CD8-positive, alpha-beta T cell (primary cell): ENCODE measurements at regions of chr21 and their contacts with region 1.

Region 1: DNA sequence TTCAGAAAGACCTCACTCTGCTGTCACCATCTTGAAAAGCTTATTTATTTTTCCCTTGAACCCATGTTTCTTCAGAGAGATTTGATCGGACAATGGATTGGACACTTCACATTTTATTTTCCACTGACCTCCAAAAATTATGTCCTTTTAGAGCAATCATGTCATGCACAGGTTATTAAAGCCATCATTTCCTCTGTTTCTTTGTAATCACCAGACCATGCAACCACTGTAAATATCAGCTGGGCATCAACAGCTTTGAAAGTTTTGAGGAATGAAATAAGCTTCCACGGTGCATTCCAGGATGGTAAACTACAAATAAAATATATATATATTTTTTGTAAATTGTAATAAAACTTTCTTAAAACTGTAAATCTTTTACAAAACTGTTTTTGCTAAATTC is 144.1 kb upstream of the ADAMTS5 start:
- DNase-seq: no peak
- ATAC-seq: no peak
- H3K4me3 ChIP-seq: no peak overlapping the region
- H3K4me3 Mint-ChIP-seq: no peak overlapping the region
- H3K27ac ChIP-seq: no peak overlapping the region
- H3K27ac Mint-ChIP-seq: no peak overlapping the region
- H3K4me1 ChIP-seq: no peaks in the 10 kb centered on the region
- H3K4me1 Mint-ChIP-seq: no peaks in the 10 kb centered on the region
- H3K27me3 ChIP-seq: no peaks in the 10 kb centered on the region
- H3K27me3 Mint-ChIP-seq: no peaks in the 10 kb centered on the region
- CTCF ChIP-seq: no peak

Region 2: GRCh38 chr21:27094184-27094948 is 16.6 kb before region 1 on chr21:
- CTCF ChIA-PET with region 1: no interaction called
- POLR2A ChIA-PET with region 1: no interaction called
- intact Hi-C with region 1: loop called in 1 of 2 experiments (anchors 2 kb)
- DNase-seq: no peak
- ATAC-seq: no peak
- H3K4me3 ChIP-seq: no peak overlapping the region
- H3K4me3 Mint-ChIP-seq: no peak overlapping the region
- H3K27ac ChIP-seq: no peak overlapping the region
- H3K27ac Mint-ChIP-seq: no peak overlapping the region
- H3K4me1 ChIP-seq: no peaks in the 10 kb centered on the region
- H3K4me1 Mint-ChIP-seq: no peaks in the 10 kb centered on the region
- H3K27me3 ChIP-seq: no peaks in the 10 kb centered on the region
- H3K27me3 Mint-ChIP-seq: no peaks in the 10 kb centered on the region
- CTCF ChIP-seq: no peak

Region 3: GRCh38 chr21:27143476-27143875 is 32.5 kb after region 1 on chr21:
- CTCF ChIA-PET with region 1: no interaction called
- POLR2A ChIA-PET with region 1: no interaction called
- intact Hi-C with region 1: no loop called
- DNase-seq: peak in 1 of 9 experiments; percentile 0
- ATAC-seq: no peak
- H3K4me3 ChIP-seq: no peak overlapping the region
- H3K4me3 Mint-ChIP-seq: no peak overlapping the region
- H3K27ac ChIP-seq: no peak overlapping the region
- H3K27ac Mint-ChIP-seq: no peak overlapping the region
- H3K4me1 ChIP-seq: no peaks in the 10 kb centered on the region
- H3K4me1 Mint-ChIP-seq: no peaks in the 10 kb centered on the region
- H3K27me3 ChIP-seq: no peaks in the 10 kb centered on the region
- H3K27me3 Mint-ChIP-seq: no peaks in the 10 kb centered on the region
- CTCF ChIP-seq: no peak